Caco-2 (cell line): ENCODE measurements at regions of chr13 and their contacts with region 1.

Region 1: DNA sequence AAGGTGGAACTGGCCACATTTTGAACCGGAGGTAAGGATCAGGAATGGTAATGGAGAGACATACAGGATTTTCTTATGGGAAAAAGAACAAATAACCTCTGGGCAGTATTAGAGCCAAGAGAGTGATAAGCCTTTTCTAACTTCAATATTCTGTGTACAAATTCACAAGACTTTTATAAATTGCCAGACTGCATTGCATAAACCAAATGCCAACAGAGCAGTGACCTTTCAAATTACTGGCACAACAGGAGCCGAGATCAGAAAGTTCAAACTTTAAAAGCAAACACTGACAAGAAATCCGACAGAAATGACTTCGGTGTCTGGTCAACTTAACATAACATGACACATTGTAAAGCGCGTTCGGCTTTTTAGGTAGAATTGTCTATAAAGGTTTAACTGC is 737.1 kb downstream of the GPC5 start:
- DNase-seq: no peak
- H3K4me3 ChIP-seq: no peak overlapping the region
- H3K4me3 Mint-ChIP-seq: no peak overlapping the region
- H3K27ac Mint-ChIP-seq: peak overlapping the region; percentile 20
- H3K4me1 ChIP-seq: no peaks in the 10 kb centered on the region
- H3K4me1 Mint-ChIP-seq: peaks cover 11% of the 10 kb centered on the region
- H3K27me3 ChIP-seq: no peaks in the 10 kb centered on the region
- H3K27me3 Mint-ChIP-seq: no peaks in the 10 kb centered on the region
- CTCF ChIP-seq: no peak

Region 2: DNA sequence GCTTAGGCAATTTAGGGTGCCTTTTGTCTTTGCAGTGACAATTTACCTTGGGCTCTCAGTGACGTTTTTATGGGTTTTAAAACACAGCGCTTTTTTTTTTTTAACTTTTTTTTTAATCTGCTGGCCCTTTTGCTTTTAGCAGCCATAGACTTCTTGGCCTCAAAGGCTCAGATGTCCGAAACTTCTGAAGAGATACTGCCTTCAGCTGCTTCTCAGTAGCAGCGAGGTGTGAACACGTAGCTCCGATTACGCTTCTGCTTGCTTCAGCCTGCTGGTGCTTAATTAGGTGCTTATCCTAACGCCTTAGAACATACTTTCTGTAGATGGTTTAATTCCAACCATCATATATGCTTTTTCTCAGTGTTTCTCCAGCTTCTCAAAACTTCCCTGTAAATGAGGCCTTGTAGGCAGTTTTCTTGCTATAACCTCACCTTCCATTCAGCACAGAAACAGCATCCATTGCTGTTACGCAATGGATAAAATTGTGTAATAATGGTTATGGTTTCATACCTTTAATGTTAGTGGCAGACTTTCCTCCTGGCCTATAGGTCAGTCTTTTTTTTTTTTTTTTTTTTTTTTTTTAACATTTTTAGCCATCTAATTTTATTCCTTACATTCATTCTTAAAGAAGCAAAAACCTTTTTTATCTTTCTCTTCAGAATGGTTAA is 13.2 kb before region 1 on chr13:
- CTCF ChIA-PET with region 1: no interaction called
- POLR2A ChIA-PET with region 1: no interaction called
- intact Hi-C with region 1: loop called (anchors 2 kb)
- DNase-seq: peak in 1 of 2 experiments; percentile 8
- H3K4me3 ChIP-seq: no peak overlapping the region
- H3K4me3 Mint-ChIP-seq: no peak overlapping the region
- H3K27ac Mint-ChIP-seq: no peak overlapping the region
- H3K4me1 ChIP-seq: no peaks in the 10 kb centered on the region
- H3K4me1 Mint-ChIP-seq: no peaks in the 10 kb centered on the region
- H3K27me3 ChIP-seq: no peaks in the 10 kb centered on the region
- H3K27me3 Mint-ChIP-seq: no peaks in the 10 kb centered on the region
- CTCF ChIP-seq: no peak